ENCODE measurements at regions of chr1 and their contacts with region 1.

Region 1: DNA sequence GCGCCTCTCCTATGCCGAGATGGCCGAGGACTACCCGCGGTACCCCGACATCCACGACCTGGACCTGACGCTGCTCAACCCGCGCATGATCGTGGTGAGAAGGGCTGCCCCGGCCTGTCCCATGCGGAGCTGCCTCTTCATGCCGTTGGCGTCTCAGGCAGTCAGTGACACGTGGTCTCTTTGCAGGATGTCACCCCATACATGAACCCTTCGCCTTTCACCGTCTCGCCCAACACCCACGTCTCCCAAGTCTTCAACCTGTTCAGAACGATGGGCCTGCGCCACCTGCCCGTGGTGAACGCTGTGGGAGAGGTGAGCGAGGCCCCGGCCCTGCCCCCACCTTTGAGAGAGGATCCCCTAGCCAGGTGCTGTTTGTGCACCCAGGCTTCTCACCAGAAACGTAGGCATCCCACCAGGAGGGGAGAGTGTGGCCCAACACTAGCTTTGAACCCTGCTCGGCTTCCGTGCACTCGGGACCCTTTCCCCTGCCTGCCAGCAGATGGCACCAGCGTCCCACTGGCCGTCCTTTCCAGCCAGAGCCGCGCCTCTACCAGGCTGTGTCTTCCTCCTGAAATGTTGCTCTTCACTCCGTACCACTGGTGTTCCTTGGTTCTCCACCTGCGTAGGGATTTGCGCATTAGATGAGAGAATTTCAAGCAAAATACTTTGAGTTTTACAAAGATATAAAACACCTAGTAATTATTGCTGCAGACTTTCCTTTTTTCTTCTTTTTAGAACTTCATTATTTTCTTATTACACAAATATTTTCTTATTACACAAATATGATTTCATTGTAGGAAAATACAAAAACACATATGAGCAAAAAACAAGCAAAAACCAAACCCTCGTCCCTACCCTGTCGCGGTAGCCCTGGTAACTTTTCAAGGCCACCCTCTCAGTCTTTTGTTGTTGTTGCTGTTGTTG is 9.0 kb downstream of the NPPA start:
- DNase-seq: peak in 1 of 2 experiments; percentile 66
- H3K4me3 ChIP-seq: no peak overlapping the region
- H3K27ac ChIP-seq: no peak overlapping the region
- H3K4me1 ChIP-seq: no peaks in the 10 kb centered on the region
- H3K27me3 ChIP-seq: no peaks in the 10 kb centered on the region
- CTCF ChIP-seq: peak; percentile 87

Region 2: GRCh38 chr1:11550664-11551283 is 287.8 kb before region 1 on chr1:
- CTCF ChIA-PET with region 1: no interaction called
- POLR2A ChIA-PET with region 1: no interaction called
- intact Hi-C with region 1: no loop called
- DNase-seq: peak; percentile 51
- H3K4me3 ChIP-seq: no peak overlapping the region
- H3K27ac ChIP-seq: no peak overlapping the region
- H3K4me1 ChIP-seq: no peaks in the 10 kb centered on the region
- H3K27me3 ChIP-seq: peaks cover 25% of the 10 kb centered on the region
- CTCF ChIP-seq: no peak

Region 3: DNA sequence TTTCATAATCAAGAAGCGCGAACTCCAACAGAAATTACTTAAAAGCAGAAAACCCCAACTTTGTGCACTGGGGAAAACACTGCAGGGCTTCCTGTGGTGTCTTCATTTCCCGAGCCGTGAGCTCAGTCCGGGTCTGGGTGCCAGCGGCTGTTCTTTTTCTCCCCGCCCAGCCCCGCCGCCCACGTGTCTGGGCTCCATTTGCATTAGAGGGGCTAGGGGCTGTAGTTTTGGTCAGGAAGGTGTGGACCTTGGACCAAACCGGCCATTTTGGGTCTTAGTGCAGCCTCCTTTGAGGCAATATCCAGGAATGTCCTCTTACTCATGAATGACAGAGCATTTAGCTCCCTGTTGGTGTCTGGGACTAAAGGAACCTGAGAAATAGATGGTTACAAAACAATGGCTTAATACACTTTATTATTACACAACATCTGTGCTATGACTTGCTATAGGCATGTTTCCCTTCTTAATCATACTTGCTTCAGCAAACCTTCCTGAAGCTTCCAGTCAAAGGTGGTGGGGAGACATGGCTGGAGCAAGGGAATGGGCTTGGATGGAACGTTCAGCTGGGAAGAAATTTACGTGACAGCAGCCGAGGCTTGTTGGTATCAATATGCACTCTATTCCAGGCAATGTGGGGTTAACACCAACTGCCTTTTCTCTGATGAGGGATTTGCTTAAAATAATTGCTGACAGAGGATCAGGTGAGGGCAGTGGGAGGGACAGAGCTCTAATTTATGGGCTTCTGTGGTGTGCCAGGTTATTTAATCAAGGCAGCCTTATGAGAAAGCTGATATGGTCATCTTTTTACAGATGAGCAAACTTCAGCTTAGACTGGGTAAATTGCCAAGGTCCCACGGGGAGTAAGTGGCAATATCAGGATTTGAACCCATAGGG is 101.6 kb before region 1 on chr1:
- CTCF ChIA-PET with region 1: no interaction called
- POLR2A ChIA-PET with region 1: no interaction called
- intact Hi-C with region 1: no loop called
- DNase-seq: peak; percentile 19 to 90
- H3K4me3 ChIP-seq: peak overlapping the region; percentile 79
- H3K27ac ChIP-seq: peak overlapping the region; percentile 96
- H3K4me1 ChIP-seq: peaks cover 9% of the 10 kb centered on the region
- H3K27me3 ChIP-seq: no peaks in the 10 kb centered on the region
- CTCF ChIP-seq: no peak

Region 4: DNA sequence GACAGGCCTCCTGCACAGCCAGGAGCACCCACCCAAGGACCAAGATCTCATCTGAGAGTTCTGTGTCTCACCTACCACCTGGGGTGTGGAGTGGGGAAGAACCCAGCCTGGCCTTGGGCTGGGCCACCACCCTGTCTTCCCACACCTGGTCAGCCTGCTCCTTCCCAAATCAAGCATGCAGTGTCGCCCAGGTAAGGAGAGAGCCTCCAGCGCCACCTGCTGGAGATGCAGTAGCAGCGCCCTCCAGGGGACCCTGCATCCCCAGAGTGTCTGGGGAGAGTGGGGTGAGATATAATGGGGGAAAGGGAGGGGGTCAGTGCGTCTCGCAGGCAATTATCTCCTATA is 55.3 kb after region 1 on chr1:
- CTCF ChIA-PET with region 1: interaction called, 3 read pairs
- POLR2A ChIA-PET with region 1: no interaction called
- intact Hi-C with region 1: loop called (anchors 1 kb)
- DNase-seq: peak; percentile 38 to 68
- H3K4me3 ChIP-seq: no peak overlapping the region
- H3K27ac ChIP-seq: no peak overlapping the region
- H3K4me1 ChIP-seq: no peaks in the 10 kb centered on the region
- H3K27me3 ChIP-seq: no peaks in the 10 kb centered on the region
- CTCF ChIP-seq: peak; percentile 88

Region 5: GRCh38 chr1:11967028-11967547 is 128.5 kb after region 1 on chr1:
- CTCF ChIA-PET with region 1: no interaction called
- POLR2A ChIA-PET with region 1: no interaction called
- intact Hi-C with region 1: loop called (anchors 1 kb)
- DNase-seq: peak; percentile 41 to 42
- H3K4me3 ChIP-seq: no peak overlapping the region
- H3K27ac ChIP-seq: no peak overlapping the region
- H3K4me1 ChIP-seq: peaks cover 6% of the 10 kb centered on the region; the same call in 1 of the 2 replicates
- H3K27me3 ChIP-seq: no peaks in the 10 kb centered on the region
- CTCF ChIP-seq: peak; percentile 68

Region 6: GRCh38 chr1:11979851-11980675 is 141.5 kb after region 1 on chr1 and contains the start of gene MFN2:
- CTCF ChIA-PET with region 1: interaction called, 6 read pairs
- POLR2A ChIA-PET with region 1: interaction called, 3 read pairs
- intact Hi-C with region 1: loop called (anchors 5 kb)
- DNase-seq: peak; percentile 83 to 94
- H3K4me3 ChIP-seq: peak within 1 kb of the TSS; percentile 85
- H3K27ac ChIP-seq: peak within 1 kb of the TSS; percentile 74
- H3K4me1 ChIP-seq: peaks cover 29% of the 10 kb centered on the region
- H3K27me3 ChIP-seq: no peaks in the 10 kb centered on the region
- CTCF ChIP-seq: no peak
- total RNA-seq, gene MFN2: 54.2 and 72.6 TPM in 2 replicates

Region 7: GRCh38 chr1:12208764-12209494 is 370.3 kb after region 1 on chr1:
- CTCF ChIA-PET with region 1: no interaction called
- POLR2A ChIA-PET with region 1: no interaction called
- intact Hi-C with region 1: loop called (anchors 10 kb)
- DNase-seq: peak in 1 of 2 experiments; percentile 80
- H3K4me3 ChIP-seq: no peak overlapping the region
- H3K27ac ChIP-seq: no peak overlapping the region
- H3K4me1 ChIP-seq: no peaks in the 10 kb centered on the region
- H3K27me3 ChIP-seq: no peaks in the 10 kb centered on the region
- CTCF ChIP-seq: peak; percentile 89

Region 8: GRCh38 chr1:12630946-12631530 is 792.4 kb after region 1 on chr1:
- CTCF ChIA-PET with region 1: no interaction called
- POLR2A ChIA-PET with region 1: no interaction called
- intact Hi-C with region 1: no loop called
- DNase-seq: no peak
- H3K4me3 ChIP-seq: no peak overlapping the region
- H3K27ac ChIP-seq: no peak overlapping the region
- H3K4me1 ChIP-seq: no peaks in the 10 kb centered on the region
- H3K27me3 ChIP-seq: no peaks in the 10 kb centered on the region
- CTCF ChIP-seq: no peak